ENCODE measurements at regions of chr9 and their contacts with region 1.

Region 1: GRCh38 chr9:69035438-69036308 is at the start of gene FXN:
- DNase-seq: peak; percentile 79
- H3K4me3 Mint-ChIP-seq: peak within 1 kb of the TSS; percentile 87
- H3K27ac Mint-ChIP-seq: peak within 1 kb of the TSS; percentile 92
- H3K4me1 Mint-ChIP-seq: peaks cover 33% of the 10 kb centered on the region
- H3K27me3 Mint-ChIP-seq: no peaks in the 10 kb centered on the region
- total RNA-seq, gene FXN: 27.2 to 32.0 TPM

Region 2: DNA sequence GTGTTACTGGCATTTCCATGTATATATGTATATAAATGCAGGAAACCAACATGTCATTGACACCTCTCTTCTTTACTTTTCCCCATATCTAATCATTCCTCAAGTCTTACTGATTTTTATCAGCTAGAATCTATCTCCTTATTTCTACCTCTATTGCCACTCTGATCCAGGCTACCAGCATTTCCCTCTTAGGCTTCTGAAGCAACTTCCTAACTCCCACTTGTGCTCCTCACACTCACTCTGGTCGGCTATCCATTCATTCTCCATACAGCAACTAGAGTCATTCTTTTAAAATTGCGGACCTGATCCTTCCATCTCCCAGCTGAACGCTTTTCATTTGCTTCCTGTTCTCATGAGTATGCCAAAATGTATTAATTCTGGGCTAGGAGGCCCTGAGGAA is 252.1 kb before region 1 on chr9:
- CTCF ChIA-PET with region 1: no interaction called
- POLR2A ChIA-PET with region 1: no interaction called
- DNase-seq: no peak
- H3K4me3 Mint-ChIP-seq: no peak overlapping the region
- H3K27ac Mint-ChIP-seq: no peak overlapping the region
- H3K4me1 Mint-ChIP-seq: peaks cover 5% of the 10 kb centered on the region
- H3K27me3 Mint-ChIP-seq: no peaks in the 10 kb centered on the region

Region 3: GRCh38 chr9:69180670-69181069 is 145.0 kb after region 1 on chr9:
- CTCF ChIA-PET with region 1: interaction called, 11 read pairs
- POLR2A ChIA-PET with region 1: no interaction called
- DNase-seq: peak; percentile 66
- H3K4me3 Mint-ChIP-seq: no peak overlapping the region
- H3K27ac Mint-ChIP-seq: peak overlapping the region; percentile 69
- H3K4me1 Mint-ChIP-seq: peaks cover 55% of the 10 kb centered on the region
- H3K27me3 Mint-ChIP-seq: peaks cover 4% of the 10 kb centered on the region